H1 (cell line): ENCODE measurements at regions of chr5 and their contacts with region 1.

Region 1: GRCh38 chr5:173331956-173332479 is 3.8 kb upstream of the STC2 start:
- DNase-seq: peak in 1 of 2 experiments; percentile 96
- H3K4me3 ChIP-seq: no peak overlapping the region
- H3K27ac ChIP-seq: no peak overlapping the region
- H3K4me1 ChIP-seq: peaks cover 7 to 17% (median 12%) of the 10 kb centered on the region in 4 experiments
- H3K27me3 ChIP-seq: peaks cover 0 to 9% (median 7%) of the 10 kb centered on the region in 4 experiments; a peak in 6 of 7 replicates
- CTCF ChIP-seq: peak in 2 of 3 experiments; percentile 93 to 96; a peak in 3 of 4 replicates
- EP300 ChIP-seq: no peak
- POLR2A ChIP-seq: no peak
- RAD21 ChIP-seq: peak; percentile 92 to 95

Region 2: DNA sequence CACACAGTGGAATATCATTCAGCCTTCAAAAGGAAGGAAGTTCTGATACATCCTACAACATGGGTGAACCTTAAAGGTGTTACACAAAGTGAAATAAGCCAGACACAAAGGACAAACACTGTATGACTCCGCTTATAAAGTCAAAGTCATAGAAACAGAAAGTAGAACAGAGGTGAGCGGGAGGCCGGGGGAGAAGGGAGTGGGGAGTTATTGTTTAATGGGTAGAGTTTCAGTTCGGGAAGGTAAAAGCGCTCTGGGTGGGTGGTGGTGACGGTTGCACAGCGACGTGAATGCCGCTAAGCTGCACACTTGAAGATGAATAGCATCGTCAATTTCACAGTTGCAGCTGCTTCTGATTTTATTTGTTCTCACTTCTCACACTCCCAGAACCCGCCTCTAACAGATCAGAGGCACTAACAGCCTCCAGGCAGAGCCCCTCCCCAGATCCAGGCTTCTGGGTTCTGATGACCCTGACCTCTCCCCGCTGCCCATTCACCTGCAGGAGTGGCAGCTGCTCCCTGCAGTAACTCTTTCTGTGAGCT is 153.6 kb before region 1 on chr5:
- CTCF ChIA-PET with region 1: no interaction called
- POLR2A ChIA-PET with region 1: no interaction called
- DNase-seq: no peak
- H3K4me3 ChIP-seq: no peak overlapping the region
- H3K27ac ChIP-seq: no peak overlapping the region
- H3K4me1 ChIP-seq: peaks cover 0 to 5% (median 2%) of the 10 kb centered on the region in 4 experiments; a peak in 2 of 7 replicates
- H3K27me3 ChIP-seq: no peaks in the 10 kb centered on the region
- CTCF ChIP-seq: no peak
- EP300 ChIP-seq: no peak
- POLR2A ChIP-seq: no peak
- RAD21 ChIP-seq: no peak

Region 3: DNA sequence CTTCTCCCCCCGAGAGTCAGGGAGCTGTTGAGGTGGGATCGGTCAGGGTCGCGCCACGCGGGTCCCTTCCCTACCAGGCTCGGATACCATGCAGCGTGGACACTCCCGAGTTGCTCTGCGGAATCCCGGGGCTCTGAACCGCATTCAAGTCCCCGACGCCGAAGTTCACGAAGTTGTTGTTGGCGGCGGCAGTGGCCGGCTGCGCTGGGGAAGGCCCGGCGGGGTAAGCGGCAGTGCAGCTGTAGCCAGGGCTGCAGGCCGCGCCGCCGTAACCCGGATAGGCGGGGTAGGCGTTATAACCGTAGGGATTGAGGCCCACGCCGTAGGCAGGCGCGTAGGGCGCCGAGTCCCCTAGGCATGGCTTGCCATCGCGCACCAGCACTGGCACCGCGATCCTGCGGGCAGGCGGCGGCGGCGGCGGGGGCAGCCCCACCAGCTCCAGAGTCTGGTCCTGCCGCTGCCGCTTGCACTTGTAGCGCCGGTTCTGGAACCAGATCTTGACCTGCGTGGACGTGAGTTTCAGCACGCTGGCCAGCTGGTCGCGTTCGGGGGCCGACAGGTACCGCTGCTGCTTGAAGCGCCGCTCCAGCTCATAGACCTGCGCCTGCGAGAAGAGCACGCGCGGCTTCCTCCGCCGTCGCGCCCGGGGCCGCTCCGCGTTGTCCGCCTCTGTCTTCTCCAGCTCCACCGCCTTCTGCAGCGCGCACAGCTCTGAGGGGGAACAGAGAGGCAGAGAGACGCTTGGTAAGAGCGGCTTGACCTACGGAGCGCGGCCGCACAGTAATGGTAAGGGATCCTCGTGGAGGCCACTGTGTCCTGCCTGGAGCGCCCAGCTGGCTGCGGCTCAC is 99.3 kb before region 1 on chr5:
- CTCF ChIA-PET with region 1: interaction called, 3 read pairs
- POLR2A ChIA-PET with region 1: interaction called, 19 read pairs
- DNase-seq: no peak
- H3K4me3 ChIP-seq: peak overlapping the region in 1 of 4 experiments; percentile 36; a peak in 2 of 8 replicates
- H3K27ac ChIP-seq: no peak overlapping the region
- H3K4me1 ChIP-seq: peaks cover under 1 to 53% (median 28%) of the 10 kb centered on the region in 4 experiments
- H3K27me3 ChIP-seq: peaks cover 95 to 100% (median 100%) of the 10 kb centered on the region in 4 experiments
- CTCF ChIP-seq: no peak
- EP300 ChIP-seq: no peak
- POLR2A ChIP-seq: no peak
- RAD21 ChIP-seq: no peak

Region 4: DNA sequence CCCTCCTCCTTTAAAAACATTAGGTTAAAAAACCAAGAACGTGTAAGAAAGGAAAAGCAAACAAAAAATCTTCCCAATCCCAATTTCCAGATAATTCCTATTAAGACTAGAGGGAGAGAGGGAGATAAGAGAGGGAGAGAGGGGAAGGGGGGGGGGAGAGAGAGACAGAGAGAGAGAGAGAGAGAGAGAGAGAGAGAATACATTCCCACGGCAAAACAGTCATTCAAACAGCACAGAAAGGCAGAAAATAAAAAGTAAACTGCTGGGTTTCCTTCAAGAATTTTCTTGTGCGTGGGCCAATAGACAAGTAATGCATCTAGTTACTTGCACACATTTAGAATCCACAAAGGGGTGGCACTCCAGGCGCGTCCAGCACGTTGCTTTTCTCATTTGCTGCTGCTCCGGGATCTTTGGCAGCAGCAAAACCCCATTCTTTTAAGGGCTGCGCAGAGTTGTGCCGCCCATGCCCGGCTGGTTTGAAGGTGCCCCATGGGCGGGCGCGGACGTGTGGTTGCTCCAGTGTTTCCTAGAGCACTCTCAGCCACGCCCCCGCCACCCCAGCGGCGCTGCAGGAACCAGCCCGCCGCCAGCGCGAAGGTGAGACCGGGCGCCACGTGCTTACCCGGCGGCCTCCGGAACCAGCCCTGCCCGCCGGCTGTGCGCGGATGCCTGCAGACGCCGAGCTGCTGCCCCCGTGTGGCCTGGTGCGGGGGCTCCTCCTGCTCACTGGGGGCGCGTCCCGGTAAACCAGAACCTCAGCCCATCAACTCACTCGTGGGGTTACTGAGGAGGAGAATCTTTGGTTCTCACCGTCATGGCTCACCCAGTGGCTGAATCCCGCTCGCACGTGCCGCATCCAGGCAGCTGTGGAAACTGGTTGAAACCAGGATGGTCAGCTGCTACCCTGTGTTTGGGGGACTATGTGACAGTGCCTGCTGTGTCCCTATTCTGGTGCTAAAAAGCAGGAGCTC is 48.4 kb before region 1 on chr5:
- CTCF ChIA-PET with region 1: interaction called, 6 read pairs
- POLR2A ChIA-PET with region 1: interaction called, 32 read pairs
- DNase-seq: peak; percentile 50 to 91
- H3K4me3 ChIP-seq: peak overlapping the region in 2 of 4 experiments; percentile 10 to 47; a peak in 3 of 8 replicates
- H3K27ac ChIP-seq: no peak overlapping the region
- H3K4me1 ChIP-seq: peaks cover 0 to 4% (median 0%) of the 10 kb centered on the region in 4 experiments; a peak in 1 of 7 replicates
- H3K27me3 ChIP-seq: peaks cover 3 to 20% (median 18%) of the 10 kb centered on the region in 4 experiments
- CTCF ChIP-seq: peak; percentile 79 to 93 (median 88)
- EP300 ChIP-seq: no peak
- POLR2A ChIP-seq: no peak
- RAD21 ChIP-seq: peak; percentile 77 to 86

Region 5: DNA sequence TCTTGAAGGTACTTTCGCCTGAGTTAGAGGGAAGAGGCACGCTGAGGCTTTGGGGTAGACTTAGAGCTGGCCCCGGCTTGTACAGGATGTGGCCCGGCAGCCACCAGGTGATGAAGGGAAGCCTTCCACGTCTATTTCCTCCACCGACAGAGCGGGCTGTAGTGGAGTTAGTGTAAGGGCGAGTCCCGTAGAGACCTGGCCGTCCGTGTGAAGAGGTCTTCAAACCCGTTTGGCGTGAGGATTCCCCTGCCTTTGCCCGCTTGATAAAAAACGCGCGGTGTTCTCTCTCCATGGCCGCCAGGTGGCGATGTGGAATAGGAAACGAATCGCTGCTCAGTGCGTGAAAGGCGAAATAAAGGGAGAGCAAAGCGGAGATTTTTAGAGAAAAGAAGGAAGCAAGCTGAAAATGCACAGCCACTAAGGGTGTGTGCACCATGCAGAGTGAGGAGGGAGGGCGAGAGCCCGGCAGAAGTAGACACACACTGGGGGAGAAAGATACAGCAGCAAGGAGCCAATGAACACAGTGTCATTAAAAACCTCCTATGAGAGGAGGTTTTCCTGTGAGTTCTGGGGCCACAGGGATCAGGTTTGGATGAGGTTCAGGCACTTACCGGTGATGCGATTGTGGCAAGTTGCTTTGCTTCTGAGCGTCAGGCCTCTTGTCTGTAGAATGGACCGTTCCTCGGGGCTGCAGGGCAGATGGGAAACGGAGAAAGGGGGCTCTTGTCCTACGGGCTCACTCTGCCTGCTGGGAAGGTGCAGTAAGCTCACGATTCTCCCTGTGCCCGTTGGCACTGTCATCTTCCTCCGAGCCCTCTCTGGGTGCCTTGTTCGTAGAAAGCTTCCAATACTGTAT is 38.0 kb before region 1 on chr5:
- CTCF ChIA-PET with region 1: interaction called, 184 read pairs
- POLR2A ChIA-PET with region 1: interaction called, 300 read pairs
- DNase-seq: peak in 1 of 2 experiments; percentile 91
- H3K4me3 ChIP-seq: peak overlapping the region in 2 of 4 experiments; percentile 11 to 12; a peak in 3 of 8 replicates
- H3K27ac ChIP-seq: no peak overlapping the region
- H3K4me1 ChIP-seq: peaks cover 15 to 28% (median 15%) of the 10 kb centered on the region in 4 experiments
- H3K27me3 ChIP-seq: peaks cover 0 to 4% (median 2%) of the 10 kb centered on the region in 4 experiments; a peak in 6 of 7 replicates
- CTCF ChIP-seq: peak; percentile 77 to 89 (median 89)
- EP300 ChIP-seq: no peak
- POLR2A ChIP-seq: no peak
- RAD21 ChIP-seq: peak; percentile 95

Region 6: DNA sequence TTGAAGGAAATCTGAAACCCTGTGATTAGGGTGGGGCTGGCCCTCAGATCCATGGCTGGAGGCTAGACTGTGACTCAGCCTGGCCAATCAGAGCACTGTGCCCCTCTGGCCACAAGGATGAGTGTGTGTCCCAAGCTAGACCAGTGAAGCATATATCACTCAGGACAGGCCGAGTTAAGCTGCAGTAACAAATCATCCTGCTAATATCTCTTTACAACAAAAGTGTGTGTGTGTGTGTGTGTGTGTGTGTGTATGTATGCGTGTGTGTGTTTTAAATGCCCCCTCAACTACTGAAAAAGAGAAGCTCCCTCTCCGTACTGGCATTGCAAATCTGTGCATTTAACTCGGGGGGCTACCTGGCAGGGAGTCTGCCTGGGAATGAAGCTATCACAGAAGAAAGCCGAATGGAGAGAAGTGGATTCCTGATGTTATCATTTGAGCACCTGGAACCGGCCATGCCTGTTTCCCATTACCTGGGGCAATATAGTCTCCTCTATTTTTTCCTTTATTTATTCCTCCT is 29.4 kb before region 1 on chr5:
- CTCF ChIA-PET with region 1: interaction called, 184 read pairs
- POLR2A ChIA-PET with region 1: interaction called, 300 read pairs
- DNase-seq: no peak
- H3K4me3 ChIP-seq: no peak overlapping the region
- H3K27ac ChIP-seq: no peak overlapping the region
- H3K4me1 ChIP-seq: peaks cover 15 to 32% (median 23%) of the 10 kb centered on the region in 4 experiments
- H3K27me3 ChIP-seq: no peaks in the 10 kb centered on the region; a peak in 4 of 7 replicates
- CTCF ChIP-seq: no peak
- EP300 ChIP-seq: no peak
- POLR2A ChIP-seq: no peak
- RAD21 ChIP-seq: no peak

Region 7: DNA sequence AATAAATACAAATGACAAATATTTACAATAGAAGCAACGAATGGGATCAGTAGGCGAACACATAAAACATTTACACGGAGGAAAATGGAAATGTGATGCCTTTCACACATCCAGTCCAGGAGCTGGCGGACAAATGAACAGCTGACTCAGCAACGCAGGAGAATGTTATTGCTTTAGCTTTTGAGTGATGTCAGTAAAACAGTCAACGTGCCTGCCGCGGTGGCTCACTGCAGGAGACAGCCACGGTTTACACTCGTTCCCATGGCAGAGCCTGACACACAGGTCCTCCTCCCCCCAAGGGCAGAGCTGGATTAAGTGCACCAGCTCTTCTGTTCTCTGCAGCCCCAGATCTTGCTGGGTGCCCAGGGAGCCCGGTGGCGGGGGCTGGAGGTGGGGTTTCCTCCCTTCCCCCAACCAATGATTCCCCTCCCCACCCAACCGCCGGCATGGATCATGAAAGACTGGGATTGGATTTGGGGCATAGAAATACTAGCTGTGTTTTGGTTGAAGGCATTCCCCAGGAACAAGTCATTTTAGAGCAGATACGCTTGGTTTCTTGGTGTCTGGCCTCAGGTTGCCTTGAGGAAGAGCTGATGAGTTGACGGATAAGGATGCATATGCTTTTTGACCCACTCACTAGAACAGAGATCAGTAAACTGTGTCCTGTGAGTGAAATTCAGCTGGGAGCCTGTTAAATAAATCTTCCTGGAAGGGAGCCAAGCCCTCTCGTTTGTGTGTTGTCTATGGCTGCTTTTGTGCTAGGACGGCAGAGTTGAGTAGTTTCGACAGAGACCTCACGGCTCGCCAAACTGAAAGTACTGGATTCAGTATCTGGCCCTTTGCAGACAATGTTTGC is 16.3 kb before region 1 on chr5:
- CTCF ChIA-PET with region 1: interaction called, 11 read pairs
- POLR2A ChIA-PET with region 1: interaction called, 491 read pairs
- DNase-seq: no peak
- H3K4me3 ChIP-seq: no peak overlapping the region
- H3K27ac ChIP-seq: peak overlapping the region; percentile 43; the same call in 1 of the 2 replicates
- H3K4me1 ChIP-seq: peaks cover 0 to 9% (median 2%) of the 10 kb centered on the region in 4 experiments; a peak in 6 of 7 replicates
- H3K27me3 ChIP-seq: no peaks in the 10 kb centered on the region
- CTCF ChIP-seq: no peak
- EP300 ChIP-seq: no peak
- POLR2A ChIP-seq: peak; percentile 58 to 65
- RAD21 ChIP-seq: no peak

Region 8: GRCh38 chr5:173573126-173573960 is 241.3 kb after region 1 on chr5:
- CTCF ChIA-PET with region 1: interaction called, 3 read pairs
- POLR2A ChIA-PET with region 1: interaction called, 12 read pairs
- DNase-seq: peak; percentile 13 to 95
- H3K4me3 ChIP-seq: peak overlapping the region in 1 of 4 experiments; percentile 39; a peak in 1 of 8 replicates
- H3K27ac ChIP-seq: no peak overlapping the region
- H3K4me1 ChIP-seq: peaks cover 0 to 7% (median 3%) of the 10 kb centered on the region in 4 experiments; a peak in 6 of 7 replicates
- H3K27me3 ChIP-seq: peaks cover 0 to 2% (median 0%) of the 10 kb centered on the region in 4 experiments; a peak in 2 of 7 replicates
- CTCF ChIP-seq: peak; percentile 88 to 95 (median 94)
- EP300 ChIP-seq: 0 out of 3 replicates have a peak, but pooled peaks of 1 of the 2 experiments have one; percentile 26
- POLR2A ChIP-seq: no peak
- RAD21 ChIP-seq: peak; percentile 85 to 92